Sigmoid colon (tissue), 7 donors: ENCODE measurements at regions of chr16 and their contacts with region 1.

Region 1: GRCh38 chr16:83813823-83814658 is 6.3 kb downstream of the HSBP1 start:
- DNase-seq: no peak
- H3K4me3 ChIP-seq: peak overlapping the region in 3 of 4 donors; percentile 4 to 19 (median 5)
- H3K27ac ChIP-seq: peak overlapping the region; percentile 55 to 75 (median 71)
- H3K4me1 ChIP-seq: peaks cover 0 to 72% (median 61%) of the 10 kb centered on the region in 4 donors
- H3K27me3 ChIP-seq: no peaks in the 10 kb centered on the region
- CTCF ChIP-seq: no peak
- EP300 ChIP-seq: no peak
- POLR2A ChIP-seq: no peak

Region 2: DNA sequence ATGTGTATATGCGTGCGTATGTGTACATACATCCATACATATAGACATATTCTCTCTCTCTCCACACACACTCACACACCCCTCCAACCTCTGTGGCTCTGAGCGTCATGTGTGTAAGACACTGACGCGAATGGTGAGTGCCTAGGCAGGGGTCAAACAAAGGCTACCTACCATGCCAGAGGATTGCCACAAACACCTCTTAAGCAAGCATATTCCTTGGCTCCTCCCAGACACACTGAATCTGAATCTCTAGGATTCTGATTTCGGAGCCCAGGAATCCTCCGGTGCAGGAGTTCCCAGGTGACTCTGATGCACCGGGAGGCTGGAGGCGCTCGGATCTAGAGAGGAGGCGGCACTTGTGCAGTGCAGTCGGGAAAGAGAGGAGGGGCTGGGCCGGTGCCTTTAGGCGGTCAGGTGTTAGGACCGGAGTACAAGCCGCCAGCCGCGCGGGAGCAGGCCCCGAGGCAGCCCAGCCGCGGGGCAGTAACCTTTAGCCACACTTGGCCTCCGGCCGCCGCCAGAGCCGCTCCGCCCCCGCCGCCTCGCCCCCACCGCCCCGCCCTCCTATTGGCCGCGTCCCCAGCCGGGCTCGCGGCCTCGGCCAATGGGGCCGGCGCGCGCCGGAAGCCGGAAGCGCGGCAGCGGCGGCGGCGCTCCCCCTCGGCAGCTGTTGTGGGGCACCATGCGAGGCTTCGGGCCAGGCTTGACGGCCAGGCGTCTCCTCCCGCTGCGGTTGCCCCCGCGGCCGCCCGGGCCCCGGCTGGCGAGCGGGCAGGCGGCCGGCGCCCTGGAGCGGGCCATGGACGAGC is 84.6 kb after region 1 on chr16 and contains the start of gene MLYCD:
- intact Hi-C with region 1: loop called (anchors 5 kb)
- DNase-seq: peak; percentile 95
- H3K4me3 ChIP-seq: peak within 1 kb of the TSS; percentile 83 to 94 (median 88)
- H3K27ac ChIP-seq: peak within 1 kb of the TSS; percentile 90 to 98 (median 96)
- H3K4me1 ChIP-seq: peaks cover 0 to 48% (median 38%) of the 10 kb centered on the region in 4 donors
- H3K27me3 ChIP-seq: no peaks in the 10 kb centered on the region
- CTCF ChIP-seq: no peak
- EP300 ChIP-seq: no peak
- POLR2A ChIP-seq: no peak
- total RNA-seq, gene MLYCD: 9.3 to 16.3 (median 10.8) TPM

Region 3: GRCh38 chr16:83964684-83965443 is 150.8 kb after region 1 on chr16:
- intact Hi-C with region 1: no loop called
- DNase-seq: no peak
- H3K4me3 ChIP-seq: no peak overlapping the region
- H3K27ac ChIP-seq: no peak overlapping the region
- H3K4me1 ChIP-seq: peaks cover 0 to 10% (median 4%) of the 10 kb centered on the region in 4 donors
- H3K27me3 ChIP-seq: peaks cover 8 to 18% (median 13%) of the 10 kb centered on the region in 3 donors
- CTCF ChIP-seq: no peak
- EP300 ChIP-seq: no peak
- POLR2A ChIP-seq: no peak